BJ (cell line): ENCODE measurements at regions of chr16 and their contacts with region 1.

Region 1: GRCh38 chr16:58755989-58756649 is 22.0 kb upstream of the GOT2 start:
- DNase-seq: no peak
- H3K4me3 ChIP-seq: no peak overlapping the region
- H3K27me3 ChIP-seq: peaks cover 2% of the 10 kb centered on the region; the same call in 1 of the 2 replicates
- CTCF ChIP-seq: peak; percentile 78

Region 2: GRCh38 chr16:58665200-58665599 is 90.9 kb before region 1 on chr16:
- CTCF ChIA-PET with region 1: no interaction called
- POLR2A ChIA-PET with region 1: no interaction called
- DNase-seq: no peak
- H3K4me3 ChIP-seq: no peak overlapping the region
- H3K27me3 ChIP-seq: no peaks in the 10 kb centered on the region
- CTCF ChIP-seq: no peak

Region 3: GRCh38 chr16:58678716-58679115 is 77.4 kb before region 1 on chr16:
- CTCF ChIA-PET with region 1: interaction called, 18 read pairs
- POLR2A ChIA-PET with region 1: no interaction called
- DNase-seq: no peak
- H3K4me3 ChIP-seq: no peak overlapping the region
- H3K27me3 ChIP-seq: no peaks in the 10 kb centered on the region
- CTCF ChIP-seq: no peak

Region 4: DNA sequence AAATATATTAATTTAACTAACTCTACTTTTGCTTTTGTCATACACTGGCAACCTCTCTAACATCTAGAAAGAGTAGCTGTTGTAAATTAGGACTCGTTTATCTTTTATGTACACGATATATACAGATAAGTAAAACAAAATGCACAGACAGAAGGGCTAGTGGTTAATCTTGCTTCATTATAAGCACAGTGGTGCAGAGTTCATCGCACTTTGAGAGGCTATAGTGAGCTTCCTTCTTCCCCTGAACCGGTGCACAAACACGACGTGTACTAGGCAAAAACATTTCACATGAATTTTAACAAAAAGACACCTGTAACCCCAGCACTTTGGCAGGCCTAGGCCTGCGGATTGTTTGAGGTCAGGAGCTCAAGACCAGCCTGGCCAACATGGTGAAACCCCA is 11.6 kb before region 1 on chr16:
- CTCF ChIA-PET with region 1: interaction called, 20 read pairs
- POLR2A ChIA-PET with region 1: no interaction called
- DNase-seq: no peak
- H3K4me3 ChIP-seq: no peak overlapping the region
- H3K27me3 ChIP-seq: no peaks in the 10 kb centered on the region
- CTCF ChIP-seq: no peak